ENCODE measurements at regions of chr2 and their contacts with region 1.

Region 1: DNA sequence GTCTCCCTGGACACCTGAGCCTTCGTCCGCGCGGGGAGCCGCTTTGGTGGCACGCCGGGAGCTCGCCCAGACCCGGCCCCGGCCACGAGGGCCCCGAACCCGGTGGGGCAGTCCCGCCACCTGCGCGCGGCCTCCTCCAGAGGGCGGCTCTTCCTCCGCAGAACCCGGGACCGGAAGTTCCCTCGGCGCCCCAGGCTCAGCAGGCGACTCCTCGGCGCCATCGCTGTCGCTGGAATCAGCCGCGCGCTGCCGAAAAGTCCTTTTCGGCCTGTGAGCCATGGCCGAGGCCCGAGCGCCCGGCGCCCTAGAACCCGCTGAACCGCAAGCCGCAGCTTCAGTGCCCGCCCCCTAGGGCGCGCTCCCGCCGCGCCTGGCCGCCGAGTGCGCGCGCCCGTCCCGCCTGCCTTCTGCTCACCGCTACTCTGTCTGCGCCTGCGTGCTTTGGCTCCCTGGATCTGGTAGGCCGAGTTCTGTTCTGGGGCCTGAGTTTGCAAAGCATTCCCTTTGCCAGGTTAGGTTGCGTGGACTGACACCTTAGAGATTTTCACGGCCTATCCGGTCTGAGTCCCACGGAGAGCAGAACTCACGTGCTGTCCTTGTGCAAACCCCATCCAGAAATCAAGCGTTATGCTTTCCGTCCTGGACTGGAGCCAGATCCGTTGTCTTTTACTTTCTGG is at the start of gene GCFC2:
- DNase-seq: peak; percentile 73 to 91 (median 85)
- H3K4me3 ChIP-seq: peak within 1 kb of the TSS; percentile 53 to 97 (median 83)
- H3K27ac ChIP-seq: peak within 1 kb of the TSS; percentile 57 to 97 (median 90)
- H3K27me3 ChIP-seq: no peaks in the 10 kb centered on the region
- CTCF ChIP-seq: peak in 55 of 56 donors; percentile 20 to 78 (median 53)
- total RNA-seq, gene GCFC2: 13.9 to 35.4 (median 22.0) TPM

Region 2: DNA sequence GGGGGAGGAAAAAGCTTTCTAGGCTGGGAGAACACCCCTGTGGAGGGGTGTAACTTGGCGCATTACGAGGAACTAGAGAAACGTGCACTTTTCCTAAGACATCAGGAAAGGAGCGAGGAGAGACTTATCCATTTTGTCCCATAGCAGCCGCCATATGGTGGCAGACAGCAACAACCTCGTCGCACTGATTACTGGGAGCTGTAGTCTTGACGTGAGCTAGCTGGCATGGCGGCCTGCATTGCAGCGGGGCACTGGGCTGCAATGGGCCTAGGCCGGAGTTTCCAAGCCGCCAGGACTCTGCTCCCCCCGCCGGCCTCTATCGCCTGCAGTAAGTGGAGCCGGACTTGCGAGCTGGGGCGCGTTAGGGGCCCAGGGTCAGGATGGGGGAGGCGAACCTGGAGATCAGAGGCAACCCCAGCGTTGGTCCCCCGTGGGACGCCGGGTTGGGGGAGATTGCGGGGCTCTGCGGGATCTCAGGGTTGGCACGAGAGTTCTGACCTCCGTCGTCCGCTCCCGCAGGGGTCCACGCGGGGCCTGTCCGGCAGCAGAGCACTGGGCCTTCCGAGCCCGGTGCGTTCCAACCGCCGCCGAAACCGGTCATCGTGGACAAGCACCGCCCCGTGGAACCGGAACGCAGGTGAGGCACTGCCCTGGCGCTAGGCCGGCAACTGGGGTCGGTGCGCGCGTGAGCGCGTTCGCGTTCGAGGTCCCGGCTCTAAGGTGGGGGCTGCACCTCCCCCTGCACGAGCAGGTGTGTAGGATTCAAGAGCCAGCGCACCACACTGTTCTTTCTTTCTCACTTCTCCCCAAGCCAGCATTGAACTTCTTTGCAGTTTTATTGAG is 63.9 kb before region 1 on chr2 and contains the start of gene MRPL19:
- intact Hi-C with region 1: loop called (anchors 2 to 5 kb)
- DNase-seq: peak; percentile 74 to 94 (median 90)
- H3K4me3 ChIP-seq: peak within 1 kb of the TSS; percentile 74 to 100 (median 94)
- H3K27ac ChIP-seq: peak within 1 kb of the TSS; percentile 57 to 95 (median 87)
- H3K27me3 ChIP-seq: no peaks in the 10 kb centered on the region
- CTCF ChIP-seq: peak in 43 of 56 donors; percentile 10 to 64 (median 34)
- total RNA-seq, gene MRPL19: 42.5 to 80.6 (median 59.1) TPM

Region 3: DNA sequence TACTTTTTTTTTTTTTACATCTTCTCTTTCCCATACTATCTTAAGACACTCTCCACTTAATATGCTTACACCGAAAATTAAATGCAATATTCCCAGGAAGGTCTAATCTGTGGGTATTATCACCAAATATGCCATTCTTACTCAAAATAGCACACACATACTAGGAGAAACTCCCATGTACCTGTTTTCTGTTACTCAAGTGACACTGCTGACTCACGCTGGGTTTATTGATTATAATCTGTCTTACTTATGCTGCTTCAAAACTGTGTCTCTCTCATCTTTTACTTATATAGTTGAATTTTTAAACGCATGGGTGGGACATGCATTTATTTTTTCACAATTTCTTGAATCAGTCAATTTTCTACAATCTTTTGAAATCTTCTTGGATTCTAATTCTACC is 34.3 kb before region 1 on chr2:
- intact Hi-C with region 1: loop called in 1 of 2 experiments (anchors 2 kb)
- DNase-seq: no peak
- H3K4me3 ChIP-seq: no peak overlapping the region
- H3K27ac ChIP-seq: peak overlapping the region in 10 of 59 donors; percentile 18 to 85 (median 60)
- H3K27me3 ChIP-seq: no peaks in the 10 kb centered on the region
- CTCF ChIP-seq: no peak

Region 4: GRCh38 chr2:76128622-76129021 is 417.9 kb after region 1 on chr2:
- intact Hi-C with region 1: no loop called
- DNase-seq: no peak
- H3K4me3 ChIP-seq: no peak overlapping the region
- H3K27ac ChIP-seq: no peak overlapping the region
- H3K27me3 ChIP-seq: no peaks in the 10 kb centered on the region
- CTCF ChIP-seq: no peak

Measured in dorsolateral prefrontal cortex (tissue), 120 donors.